ENCODE measurements at regions of chr4 and their contacts with region 1.

Region 1: GRCh38 chr4:26992657-26993361 is 132.2 kb downstream of the STIM2 start:
- DNase-seq: peak in 2 of 3 donors; percentile 19 to 43
- ATAC-seq: peak; percentile 95 to 96
- H3K4me3 ChIP-seq: no peak overlapping the region
- H3K27ac ChIP-seq: no peak overlapping the region
- H3K4me1 ChIP-seq: peaks cover 2% of the 10 kb centered on the region
- H3K27me3 ChIP-seq: no peaks in the 10 kb centered on the region

Region 2: GRCh38 chr4:26860157-26860921 is 132.5 kb before region 1 on chr4 and contains the start of gene STIM2:
- intact Hi-C with region 1: loop called in 1 of 4 experiments (anchors 10 kb)
- DNase-seq: peak; percentile 96 to 99 (median 98)
- ATAC-seq: peak; percentile 93 to 95
- H3K4me3 ChIP-seq: peak within 1 kb of the TSS; percentile 91
- H3K27ac ChIP-seq: peak within 1 kb of the TSS; percentile 98
- H3K4me1 ChIP-seq: peaks cover 3% of the 10 kb centered on the region
- H3K27me3 ChIP-seq: no peaks in the 10 kb centered on the region
- total RNA-seq, gene STIM2: 13.9 to 20.8 (median 17.4) TPM